ENCODE measurements at regions of chr13 and their contacts with region 1.

Region 1: GRCh38 chr13:97344265-97345175 is 89.4 kb upstream of the RAP2A start:
- DNase-seq: peak in 4 of 5 donors; percentile 51 to 71 (median 58)
- ATAC-seq: peak; percentile 63 to 83 (median 81)
- H3K4me3 ChIP-seq: no peak overlapping the region
- H3K27ac ChIP-seq: peak overlapping the region in 6 of 12 donors; percentile 2 to 50 (median 17)
- H3K4me1 ChIP-seq: peaks cover 6 to 52% (median 21%) of the 10 kb centered on the region in 12 donors
- H3K27me3 ChIP-seq: no peaks in the 10 kb centered on the region
- CTCF ChIP-seq: peak; percentile 58 to 82 (median 74)
- POLR2A ChIP-seq: no peak

Region 2: DNA sequence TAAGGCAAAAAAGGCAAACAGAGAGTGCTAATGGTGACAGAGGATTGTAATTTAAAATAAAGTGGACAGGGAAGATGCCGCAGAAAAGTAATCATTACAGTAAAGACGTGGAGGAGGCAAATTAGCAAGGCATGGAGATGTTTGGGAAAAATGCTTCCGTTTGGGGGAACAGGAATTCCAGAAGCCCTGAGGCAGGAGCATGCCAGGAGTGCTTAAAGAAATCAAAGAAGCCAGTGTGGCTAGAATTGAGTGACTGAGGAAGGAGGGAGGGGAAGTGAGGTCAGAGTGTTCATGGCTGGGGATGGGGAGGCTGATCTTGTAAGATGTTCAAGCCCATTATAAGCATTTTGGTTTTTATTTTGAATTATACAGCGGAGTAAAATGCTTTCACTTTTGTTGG is 451.7 kb before region 1 on chr13:
- intact Hi-C with region 1: no loop called
- DNase-seq: no peak
- ATAC-seq: no peak
- H3K4me3 ChIP-seq: no peak overlapping the region
- H3K27ac ChIP-seq: no peak overlapping the region
- H3K4me1 ChIP-seq: no peaks in the 10 kb centered on the region
- H3K27me3 ChIP-seq: peaks cover 0 to 2% (median 0%) of the 10 kb centered on the region in 9 donors
- CTCF ChIP-seq: no peak
- POLR2A ChIP-seq: no peak

Region 3: DNA sequence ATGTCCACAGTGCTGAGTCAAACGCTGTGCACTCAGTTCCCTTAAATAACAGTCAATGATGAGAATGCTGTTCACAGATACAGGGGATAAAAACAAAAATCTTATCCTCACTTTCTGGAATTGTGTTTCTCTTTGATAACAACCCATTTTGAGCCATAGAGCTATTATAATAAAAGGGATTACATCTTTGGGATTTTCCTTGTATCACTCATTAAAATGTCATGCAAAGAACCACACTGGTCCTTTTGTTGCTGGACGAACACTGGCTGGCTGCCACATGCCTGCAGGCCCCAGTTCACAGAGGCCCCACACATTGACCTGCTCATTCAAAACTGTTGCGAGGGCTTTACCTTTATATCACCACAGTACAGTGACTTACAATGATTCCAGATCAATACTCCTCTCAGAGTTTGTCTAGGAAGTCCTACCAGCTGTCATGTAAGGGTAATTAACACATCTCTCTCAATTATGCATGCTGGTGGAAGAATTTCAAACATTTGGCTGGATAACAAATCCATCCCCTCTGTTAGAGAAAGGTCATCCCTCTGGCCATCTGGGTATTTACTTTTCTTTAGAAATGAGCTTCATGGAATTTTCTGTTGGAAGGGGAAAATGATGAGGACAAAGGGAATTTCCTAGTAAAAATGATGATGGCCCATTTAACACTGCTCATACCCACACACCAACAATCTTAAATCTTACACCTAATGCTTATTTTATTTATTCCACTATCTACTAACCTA is 36.5 kb before region 1 on chr13:
- intact Hi-C with region 1: loop called in 1 of 10 experiments (anchors 5 kb)
- DNase-seq: peak in 3 of 5 donors; percentile 49 to 52 (median 51)
- ATAC-seq: peak; percentile 48 to 65 (median 58)
- H3K4me3 ChIP-seq: no peak overlapping the region
- H3K27ac ChIP-seq: peak overlapping the region in 8 of 12 donors; percentile 28 to 58 (median 38)
- H3K4me1 ChIP-seq: peaks cover 6 to 76% (median 40%) of the 10 kb centered on the region in 12 donors
- H3K27me3 ChIP-seq: no peaks in the 10 kb centered on the region
- CTCF ChIP-seq: no peak
- POLR2A ChIP-seq: no peak